HCT116 (cell line): ENCODE measurements at regions of chr1 and their contacts with region 1.

Region 1: GRCh38 chr1:161389691-161390558 is 22.2 kb upstream of the CFAP126 start:
- DNase-seq: peak; percentile 92
- ATAC-seq: peak; percentile 94
- H3K4me3 ChIP-seq: peak overlapping the region; percentile 56 to 63
- H3K27ac ChIP-seq: peak overlapping the region; percentile 80
- H3K4me1 ChIP-seq: peaks cover 14 to 28% of the 10 kb centered on the region in 2 experiments
- H3K27me3 ChIP-seq: no peaks in the 10 kb centered on the region
- CTCF ChIP-seq: no peak
- POLR2A ChIP-seq: peak; percentile 70
- RAD21 ChIP-seq: no peak

Region 2: DNA sequence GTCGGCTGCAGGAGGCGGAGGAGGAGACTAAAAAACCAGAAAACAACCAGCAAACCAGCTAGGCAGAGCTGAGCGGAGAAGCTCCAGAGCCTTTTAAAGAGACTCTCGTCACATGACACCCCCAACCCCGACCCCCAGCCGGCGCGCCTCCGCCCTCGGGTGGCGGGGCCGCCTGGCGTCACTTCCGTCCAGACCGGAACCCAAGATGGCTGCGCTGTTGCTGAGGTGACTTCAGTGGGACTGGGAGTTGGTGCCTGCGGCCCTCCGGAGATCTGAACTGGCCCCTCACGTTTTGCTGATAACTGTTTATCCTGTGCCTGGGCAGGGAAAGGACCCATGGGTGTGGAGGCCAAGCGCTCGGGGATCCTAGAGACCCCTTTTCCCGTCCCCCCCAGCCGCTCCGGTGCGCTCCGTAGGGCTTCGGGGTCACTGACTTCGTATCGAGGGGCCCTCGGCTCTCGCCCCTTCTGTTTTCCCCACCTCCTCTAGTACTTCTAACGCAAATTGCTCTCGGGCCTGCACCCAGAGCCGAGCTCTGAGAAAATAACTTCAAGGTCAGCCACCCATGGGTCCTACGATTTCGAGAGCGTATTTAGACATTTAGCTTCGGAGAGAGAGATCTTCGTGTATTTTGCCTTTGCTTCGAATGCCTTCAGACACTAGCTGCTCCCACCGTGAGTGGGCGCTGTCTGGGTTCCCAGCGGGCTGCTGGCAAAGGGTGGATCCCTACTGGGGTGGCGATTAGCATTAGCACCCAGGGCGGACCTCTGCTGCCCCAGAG is 75.5 kb before region 1 on chr1 and contains the start of gene SDHC:
- CTCF ChIA-PET with region 1: no interaction called
- POLR2A ChIA-PET with region 1: no interaction called
- RAD21 ChIA-PET with region 1: no interaction called
- intact Hi-C with region 1: loop called (anchors 10 kb)
- DNase-seq: peak; percentile 54
- ATAC-seq: peak; percentile 93
- H3K4me3 ChIP-seq: peak within 1 kb of the TSS; percentile 86 to 97
- H3K27ac ChIP-seq: peak within 1 kb of the TSS; percentile 76
- H3K4me1 ChIP-seq: peaks cover 7 to 14% of the 10 kb centered on the region in 2 experiments
- H3K27me3 ChIP-seq: no peaks in the 10 kb centered on the region
- CTCF ChIP-seq: peak in 2 of 3 experiments; percentile 38 to 45; a peak in 3 of 6 replicates
- POLR2A ChIP-seq: peak; percentile 84
- RAD21 ChIP-seq: no peak
- total RNA-seq, gene SDHC: 192 TPM